Activated B cell treated with CpG ODN at 0.5 μM for 24 hours (primary cell): ENCODE measurements at regions of chrX and their contacts with region 1.

Region 1: GRCh38 chrX:133921764-133922389 is 63.5 kb downstream of the GPC3 start:
- DNase-seq: peak; percentile 15
- ATAC-seq: no peak
- H3K4me3 Mint-ChIP-seq: no peak overlapping the region
- H3K27ac Mint-ChIP-seq: no peak overlapping the region
- H3K4me1 Mint-ChIP-seq: peaks cover 9% of the 10 kb centered on the region
- H3K27me3 Mint-ChIP-seq: no peaks in the 10 kb centered on the region
- CTCF ChIP-seq: no peak

Region 2: DNA sequence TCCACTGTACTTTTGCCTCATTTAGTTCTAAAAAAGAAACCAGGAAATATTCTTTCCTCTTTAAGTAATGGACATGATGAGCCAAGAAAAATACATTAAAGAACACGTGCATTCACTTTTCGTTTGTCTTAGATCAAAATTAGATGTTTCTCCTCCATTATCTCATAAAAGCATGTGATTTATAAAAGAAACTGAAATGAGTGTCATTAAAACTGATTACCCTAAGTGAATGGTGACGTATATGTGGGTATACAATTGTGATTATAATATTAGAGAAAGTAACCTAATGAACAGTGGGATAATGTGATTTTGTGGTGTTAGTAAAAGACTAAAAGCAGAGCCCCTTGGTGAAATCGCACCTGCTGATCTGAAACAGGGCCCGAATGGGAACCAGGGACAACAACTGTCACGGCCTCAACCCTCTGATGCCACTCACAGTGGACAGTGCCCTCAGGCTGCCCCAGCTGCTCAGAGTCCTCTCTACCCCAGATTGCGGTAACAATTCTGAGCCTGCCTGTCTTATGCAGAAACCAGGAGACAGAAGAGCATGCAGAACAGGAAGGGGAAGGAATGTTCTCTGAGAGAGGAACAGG is 937.7 kb before region 1 on chrX:
- CTCF ChIA-PET with region 1: no interaction called
- POLR2A ChIA-PET with region 1: no interaction called
- intact Hi-C with region 1: loop called (anchors 5 kb)
- DNase-seq: no peak
- ATAC-seq: no peak
- H3K4me3 Mint-ChIP-seq: no peak overlapping the region
- H3K27ac Mint-ChIP-seq: no peak overlapping the region
- H3K4me1 Mint-ChIP-seq: no peaks in the 10 kb centered on the region
- H3K27me3 Mint-ChIP-seq: no peaks in the 10 kb centered on the region
- CTCF ChIP-seq: no peak

Region 3: DNA sequence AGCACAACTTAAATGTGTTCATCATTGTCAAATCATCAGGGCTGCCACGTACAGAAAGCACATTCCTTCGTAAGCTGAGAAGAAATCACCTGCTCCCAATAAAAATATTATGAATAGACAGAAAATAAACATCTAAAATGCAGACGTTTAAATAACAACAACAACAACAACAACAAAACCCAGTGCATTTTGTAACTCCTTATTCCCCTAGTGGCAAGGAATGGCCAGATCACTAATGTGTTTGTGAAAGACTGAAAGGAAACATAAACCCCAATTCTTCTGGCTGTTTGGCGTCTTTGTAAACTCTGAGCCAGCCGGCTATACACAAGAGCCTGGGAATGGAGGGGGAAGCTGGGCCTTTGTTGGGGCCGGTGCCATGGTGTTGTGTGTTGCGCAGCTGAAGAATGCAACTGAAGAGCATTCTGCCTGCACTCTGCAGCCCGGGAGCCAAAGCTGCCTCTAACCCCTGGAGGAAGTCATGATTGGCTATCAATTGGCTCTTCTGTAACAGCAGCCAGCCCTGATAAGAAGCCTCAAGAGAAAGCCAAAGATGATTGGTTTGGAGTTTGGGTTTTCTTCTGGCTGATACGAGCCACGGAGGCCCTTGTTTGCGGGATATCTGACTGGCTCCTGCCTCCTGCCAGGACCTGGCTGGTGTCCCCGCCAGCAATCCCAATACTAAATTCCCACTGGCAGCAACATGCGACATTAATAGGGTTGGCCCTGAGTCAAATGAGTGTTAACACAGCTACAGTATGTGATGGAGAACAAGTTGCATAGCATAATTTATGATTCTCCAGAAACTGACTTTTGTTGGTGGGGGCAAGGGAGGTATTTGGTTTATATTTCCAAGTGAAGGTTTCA is 614.0 kb before region 1 on chrX:
- CTCF ChIA-PET with region 1: no interaction called
- POLR2A ChIA-PET with region 1: no interaction called
- intact Hi-C with region 1: no loop called
- DNase-seq: no peak
- ATAC-seq: no peak
- H3K4me3 Mint-ChIP-seq: no peak overlapping the region
- H3K27ac Mint-ChIP-seq: no peak overlapping the region
- H3K4me1 Mint-ChIP-seq: no peaks in the 10 kb centered on the region
- H3K27me3 Mint-ChIP-seq: no peaks in the 10 kb centered on the region
- CTCF ChIP-seq: no peak